Panc1 (cell line): ENCODE measurements at regions of chr5 and their contacts with region 1.

Region 1: DNA sequence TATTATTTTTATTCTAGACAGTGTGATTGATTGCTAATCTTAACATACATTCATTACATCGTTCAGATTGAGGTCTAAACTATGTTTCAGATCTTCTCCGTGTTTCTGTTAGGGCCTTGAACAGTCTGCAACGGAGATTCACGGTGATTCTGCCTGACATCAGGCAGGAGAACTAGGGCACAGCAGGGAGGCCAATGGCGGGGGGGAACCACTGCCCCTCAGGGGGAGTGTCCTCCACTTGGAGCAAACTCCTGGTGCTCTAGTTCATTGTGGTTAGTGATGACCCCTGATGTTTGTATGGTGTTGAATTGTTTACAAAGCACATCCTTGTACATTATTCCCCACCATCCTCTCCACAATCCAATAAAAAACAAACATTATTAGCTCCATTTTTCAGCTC is 173.5 kb downstream of the ZNF608 start:
- DNase-seq: no peak
- ATAC-seq: no peak
- H3K4me3 ChIP-seq: no peak overlapping the region
- H3K27ac ChIP-seq: peak overlapping the region; percentile 31; the same call in 1 of the 2 replicates
- H3K4me1 ChIP-seq: peaks cover 6% of the 10 kb centered on the region
- H3K27me3 ChIP-seq: no peaks in the 10 kb centered on the region
- CTCF ChIP-seq: no peak

Region 2: DNA sequence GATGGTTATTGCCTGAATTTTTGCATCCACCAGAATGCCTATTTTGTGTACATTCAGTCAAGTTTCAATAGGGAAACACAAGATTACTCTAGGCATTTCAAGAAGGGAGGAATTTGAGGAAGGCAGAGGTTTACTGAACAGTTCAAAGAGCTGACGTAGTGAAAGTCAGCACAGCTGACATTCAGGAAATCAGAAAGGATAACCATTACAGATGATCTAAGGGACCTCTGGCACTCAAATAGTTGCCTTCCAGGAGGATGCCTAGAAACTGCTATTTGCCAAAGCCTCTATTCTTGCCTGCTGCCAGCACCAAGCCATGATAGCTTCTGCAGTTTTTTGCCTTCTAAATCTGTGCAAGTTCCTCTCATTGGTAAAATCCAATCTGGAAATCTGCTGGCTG is 687.9 kb before region 1 on chr5:
- CTCF ChIA-PET with region 1: interaction called, 12 read pairs
- POLR2A ChIA-PET with region 1: no interaction called
- in situ Hi-C with region 1: no loop called
- intact Hi-C with region 1: no loop called
- DNase-seq: no peak
- ATAC-seq: no peak
- H3K4me3 ChIP-seq: no peak overlapping the region
- H3K27ac ChIP-seq: peak overlapping the region; percentile 52; the same call in 1 of the 2 replicates
- H3K4me1 ChIP-seq: peaks cover 29% of the 10 kb centered on the region
- H3K27me3 ChIP-seq: no peaks in the 10 kb centered on the region
- CTCF ChIP-seq: no peak

Region 3: DNA sequence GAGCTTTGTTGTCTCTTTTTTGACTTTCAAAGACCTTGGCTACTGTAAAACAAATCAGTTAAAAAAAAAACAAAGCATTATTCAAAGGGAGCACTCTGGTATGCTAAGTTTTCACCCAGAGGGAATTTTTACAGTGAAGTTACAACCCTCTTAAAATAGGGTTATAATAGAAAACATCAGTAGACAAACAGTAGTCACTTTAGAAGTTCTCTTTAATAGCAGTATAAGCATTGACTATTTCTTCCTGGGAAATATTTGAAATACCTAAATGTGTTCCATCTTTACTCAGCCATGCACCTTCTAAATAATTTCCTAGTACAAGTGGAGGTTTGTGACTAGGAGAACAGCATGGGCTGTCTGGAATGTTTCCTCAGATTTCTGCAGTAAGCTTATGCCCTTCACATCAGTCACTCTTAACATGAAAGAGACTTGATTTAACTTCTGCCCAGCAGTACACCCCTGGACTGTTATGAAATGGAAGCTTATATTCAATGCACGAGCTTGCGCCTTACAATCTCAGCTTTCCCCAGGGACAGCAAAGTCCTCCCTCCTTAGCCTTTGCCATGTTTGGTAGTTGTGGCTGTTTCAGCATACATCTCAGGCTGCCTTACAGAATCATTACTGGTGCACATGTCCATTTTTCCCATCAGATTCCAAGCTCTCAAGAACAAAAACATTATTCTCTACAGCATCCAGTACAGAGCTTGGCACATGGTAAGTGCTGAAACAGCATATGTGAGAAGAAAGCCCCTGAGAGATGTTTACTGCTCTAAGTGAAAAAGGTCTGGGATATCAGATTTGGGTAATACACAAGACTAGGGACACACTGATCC is 18.0 kb before region 1 on chr5:
- CTCF ChIA-PET with region 1: no interaction called
- POLR2A ChIA-PET with region 1: no interaction called
- in situ Hi-C with region 1: no loop called
- intact Hi-C with region 1: no loop called
- DNase-seq: no peak
- ATAC-seq: peak; percentile 30; the same call in 1 of the 2 replicates
- H3K4me3 ChIP-seq: no peak overlapping the region
- H3K27ac ChIP-seq: peak overlapping the region; percentile 53; the same call in 1 of the 2 replicates
- H3K4me1 ChIP-seq: peaks cover 5% of the 10 kb centered on the region
- H3K27me3 ChIP-seq: no peaks in the 10 kb centered on the region
- CTCF ChIP-seq: no peak

Region 4: GRCh38 chr5:125057912-125058826 is 485.2 kb after region 1 on chr5:
- CTCF ChIA-PET with region 1: no interaction called
- POLR2A ChIA-PET with region 1: no interaction called
- in situ Hi-C with region 1: no loop called
- intact Hi-C with region 1: no loop called
- DNase-seq: no peak
- ATAC-seq: no peak
- H3K4me3 ChIP-seq: no peak overlapping the region
- H3K27ac ChIP-seq: peak overlapping the region; percentile 41; the same call in 1 of the 2 replicates
- H3K4me1 ChIP-seq: no peaks in the 10 kb centered on the region
- H3K27me3 ChIP-seq: no peaks in the 10 kb centered on the region
- CTCF ChIP-seq: no peak